Heart right ventricle (tissue), 16 donors: ENCODE measurements at regions of chr2 and their contacts with region 1.

Region 1: DNA sequence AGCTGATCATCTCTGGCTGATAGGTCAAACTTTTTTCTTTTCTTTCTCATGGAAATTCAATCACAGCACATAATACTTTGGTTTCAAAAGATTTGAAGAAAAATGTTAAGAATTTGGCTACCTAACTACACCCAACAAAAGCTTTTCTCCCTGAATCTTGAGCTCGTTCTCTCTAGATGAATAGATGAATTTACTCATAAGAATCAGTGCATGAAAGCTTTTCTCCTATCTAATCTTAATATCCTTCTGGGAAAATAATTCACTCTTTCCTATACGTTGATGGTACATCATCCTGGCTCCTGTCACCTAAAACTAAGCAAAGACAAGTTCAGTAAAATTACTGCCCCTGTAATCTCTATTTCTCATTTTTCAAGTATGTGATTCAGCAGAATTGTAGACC is 1479.1 kb downstream of the DPP10 start:
- DNase-seq: no peak
- ATAC-seq: no peak
- H3K4me3 ChIP-seq: no peak overlapping the region
- H3K27ac ChIP-seq: no peak overlapping the region
- H3K4me1 ChIP-seq: no peaks in the 10 kb centered on the region
- H3K27me3 ChIP-seq: no peaks in the 10 kb centered on the region
- CTCF ChIP-seq: no peak

Region 2: DNA sequence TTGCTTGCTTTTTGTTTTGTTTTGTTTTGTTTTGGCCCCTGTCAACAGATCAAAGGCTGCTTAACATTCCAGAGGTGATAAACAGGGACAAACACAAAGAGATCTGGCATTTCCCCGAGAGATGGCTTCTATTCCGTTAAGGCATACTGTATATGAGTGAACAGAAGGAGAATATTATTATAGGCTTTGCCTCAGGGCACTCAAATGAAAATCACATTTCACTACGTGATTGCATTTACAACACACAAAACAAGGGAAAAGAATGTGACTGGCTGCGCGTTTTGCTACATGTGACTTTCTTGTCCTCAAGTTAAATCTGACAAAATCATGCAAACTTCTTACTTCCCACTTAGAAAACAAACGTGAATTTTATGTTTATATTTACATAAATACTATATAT is 855.0 kb after region 1 on chr2:
- intact Hi-C with region 1: loop called in 1 of 10 experiments (anchors 5 kb)
- DNase-seq: no peak
- ATAC-seq: no peak
- H3K4me3 ChIP-seq: no peak overlapping the region
- H3K27ac ChIP-seq: no peak overlapping the region
- H3K4me1 ChIP-seq: no peaks in the 10 kb centered on the region
- H3K27me3 ChIP-seq: no peaks in the 10 kb centered on the region
- CTCF ChIP-seq: no peak